ENCODE measurements at regions of chr1 and their contacts with region 1.

Region 1: GRCh38 chr1:155176544-155177071 is 3.0 kb downstream of the TRIM46 start:
- DNase-seq: peak; percentile 81 to 83
- H3K4me3 ChIP-seq: no peak overlapping the region
- H3K27ac ChIP-seq: no peak overlapping the region
- H3K4me1 ChIP-seq: peaks cover 0 to 4% of the 10 kb centered on the region in 2 donors
- H3K27me3 ChIP-seq: no peaks in the 10 kb centered on the region
- CTCF ChIP-seq: peak; percentile 88 to 92 (median 89)
- POLR2A ChIP-seq: no peak

Region 2: DNA sequence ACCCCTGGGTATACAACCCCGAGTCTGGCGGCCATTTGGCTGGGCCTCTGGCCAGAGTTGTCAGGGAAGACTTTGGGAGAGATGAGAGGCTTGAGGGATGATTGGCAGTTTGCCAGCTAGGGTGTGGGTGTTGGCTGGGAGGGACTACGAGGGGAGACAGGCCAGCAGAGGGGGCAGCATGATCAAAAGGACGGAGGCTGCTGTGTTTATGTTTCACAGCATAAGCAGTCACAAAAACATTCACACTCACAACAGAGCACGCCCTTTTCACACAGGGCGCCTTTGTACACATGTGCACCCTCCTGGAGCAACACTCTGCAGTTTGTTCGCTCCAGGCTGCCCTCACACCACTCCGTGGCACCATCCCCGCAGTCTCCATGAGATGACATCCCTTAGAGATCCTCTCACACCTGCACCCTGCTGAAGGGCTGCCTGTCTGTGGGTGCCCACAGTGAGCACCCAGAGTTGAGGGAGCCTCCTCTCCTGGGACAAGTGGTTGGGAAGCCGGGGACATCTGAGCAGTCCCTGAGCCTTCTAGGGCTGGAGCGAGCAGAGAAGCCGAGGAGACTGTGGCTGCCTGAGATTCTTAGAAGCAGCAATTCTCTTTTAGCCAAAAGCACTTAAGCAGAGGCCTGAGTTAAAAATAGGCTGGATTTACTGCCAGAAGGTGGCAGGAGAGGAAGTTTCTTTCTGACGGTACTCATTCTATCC is 82.5 kb before region 1 on chr1:
- intact Hi-C with region 1: loop called (anchors 2 kb)
- DNase-seq: peak; percentile 54 to 72
- H3K4me3 ChIP-seq: no peak overlapping the region
- H3K27ac ChIP-seq: peak overlapping the region; percentile 64 to 76
- H3K4me1 ChIP-seq: peaks cover 4 to 5% of the 10 kb centered on the region in 2 donors
- H3K27me3 ChIP-seq: no peaks in the 10 kb centered on the region
- CTCF ChIP-seq: peak in 3 of 4 experiments; percentile 52 to 55 (median 55)
- POLR2A ChIP-seq: no peak

Region 3: DNA sequence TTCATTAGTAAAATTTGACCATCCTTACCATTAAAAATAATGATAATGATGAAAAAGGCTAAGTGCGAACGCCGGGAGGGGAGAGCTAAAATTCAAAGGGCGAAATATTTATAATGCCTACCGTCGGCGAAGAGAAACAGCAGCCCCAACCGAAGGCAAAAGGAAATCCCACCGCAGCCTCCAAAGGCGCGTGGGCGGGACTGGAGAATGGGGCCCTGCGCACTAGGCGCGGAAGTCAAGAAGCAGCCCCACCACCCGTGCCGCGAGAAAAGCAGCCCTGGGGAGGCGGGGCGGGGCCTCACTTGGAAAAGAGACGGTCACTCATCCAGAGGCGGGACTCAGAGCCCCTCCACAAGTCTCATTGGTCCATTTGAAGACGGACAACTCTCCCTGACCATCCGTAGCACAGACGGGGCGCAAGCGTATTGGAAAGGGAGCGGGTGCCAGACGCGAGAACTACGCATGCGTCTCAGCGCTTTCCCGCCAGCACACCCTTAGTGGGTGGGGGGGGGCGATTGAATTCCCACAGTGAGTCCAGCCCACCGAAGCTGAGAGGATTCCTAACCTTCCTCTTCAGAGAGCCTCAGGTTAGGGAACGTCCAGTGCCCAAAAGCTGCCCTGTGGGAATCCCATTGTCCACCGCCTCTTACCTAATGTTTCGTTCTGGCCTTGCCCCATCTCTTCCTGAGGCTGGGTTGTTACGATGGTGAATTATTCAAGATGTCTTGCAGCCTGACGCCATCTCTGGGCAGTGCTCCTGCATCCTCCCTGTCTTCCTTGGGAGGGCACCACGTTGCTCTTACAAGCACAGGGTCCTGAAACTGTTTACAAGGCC is 50.9 kb after region 1 on chr1:
- intact Hi-C with region 1: loop called (anchors 5 kb)
- DNase-seq: peak; percentile 98 to 99
- H3K4me3 ChIP-seq: peak overlapping the region; percentile 49 to 84
- H3K27ac ChIP-seq: peak overlapping the region; percentile 87 to 96
- H3K4me1 ChIP-seq: no peaks in the 10 kb centered on the region
- H3K27me3 ChIP-seq: no peaks in the 10 kb centered on the region
- CTCF ChIP-seq: peak in 2 of 4 experiments; percentile 6 to 25
- POLR2A ChIP-seq: peak; percentile 73 to 81

Measured in uterus (tissue), 4 donors.